MCF 10A (cell line): ENCODE measurements at regions of chr18 and their contacts with region 1.

Region 1: GRCh38 chr18:54224379-54225014 is at the start of gene MBD2:
- DNase-seq: peak; percentile 95
- H3K4me3 Mint-ChIP-seq: peak within 1 kb of the TSS; percentile 93
- H3K27ac Mint-ChIP-seq: peak within 1 kb of the TSS; percentile 97
- H3K4me1 Mint-ChIP-seq: peaks cover 11% of the 10 kb centered on the region
- H3K27me3 Mint-ChIP-seq: no peaks in the 10 kb centered on the region
- CTCF ChIP-seq: no peak
- total RNA-seq, gene MBD2: 179 and 194 TPM in 2 replicates

Region 2: GRCh38 chr18:54149078-54149697 is 75.3 kb before region 1 on chr18:
- CTCF ChIA-PET with region 1: no interaction called
- POLR2A ChIA-PET with region 1: interaction called, 30 read pairs
- intact Hi-C with region 1: loop called (anchors 1 kb)
- DNase-seq: peak; percentile 93
- H3K4me3 Mint-ChIP-seq: peak overlapping the region; percentile 65
- H3K27ac Mint-ChIP-seq: peak overlapping the region; percentile 99
- H3K4me1 Mint-ChIP-seq: peaks cover 42% of the 10 kb centered on the region
- H3K27me3 Mint-ChIP-seq: no peaks in the 10 kb centered on the region
- CTCF ChIP-seq: no peak

Region 3: DNA sequence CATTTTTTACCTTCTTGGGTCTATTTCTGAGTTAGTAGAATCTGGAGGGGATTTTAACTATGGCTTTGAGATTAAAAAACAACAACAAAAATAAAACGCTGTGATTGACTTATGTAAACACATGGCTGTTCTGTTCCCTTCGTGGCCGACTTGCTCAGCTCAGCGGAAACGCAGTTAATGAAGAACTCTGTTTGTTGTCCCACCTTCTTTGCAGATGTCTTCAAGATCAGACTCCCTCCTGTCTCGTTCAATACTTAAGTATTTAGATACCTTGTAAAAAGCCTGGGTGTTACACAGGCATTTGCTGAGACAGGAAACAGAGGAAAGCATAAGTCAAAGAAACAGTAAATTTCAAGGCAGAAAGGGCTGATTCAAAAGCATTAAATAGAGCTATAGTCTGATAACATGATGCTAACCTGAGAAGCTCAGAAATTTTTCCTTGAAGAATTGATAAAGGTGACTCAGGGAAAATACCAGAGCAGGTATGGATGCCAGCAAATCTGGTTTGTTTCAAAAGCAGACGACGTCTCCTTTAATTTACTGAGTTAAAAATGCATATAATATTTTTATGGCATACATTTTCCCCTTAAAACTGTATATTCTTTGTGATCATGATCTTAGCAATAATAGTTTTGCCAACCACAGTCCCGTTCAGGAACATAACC is 23.1 kb after region 1 on chr18:
- CTCF ChIA-PET with region 1: interaction called, 12 read pairs
- POLR2A ChIA-PET with region 1: interaction called, 45 read pairs
- intact Hi-C with region 1: no loop called
- DNase-seq: no peak
- H3K4me3 Mint-ChIP-seq: no peak overlapping the region
- H3K27ac Mint-ChIP-seq: peak overlapping the region; percentile 96
- H3K4me1 Mint-ChIP-seq: peaks cover 17% of the 10 kb centered on the region
- H3K27me3 Mint-ChIP-seq: no peaks in the 10 kb centered on the region
- CTCF ChIP-seq: no peak

Region 4: GRCh38 chr18:54330768-54331548 is 106.5 kb after region 1 on chr18:
- CTCF ChIA-PET with region 1: interaction called, 3 read pairs
- POLR2A ChIA-PET with region 1: no interaction called
- intact Hi-C with region 1: loop called (anchors 1 kb)
- DNase-seq: peak; percentile 8
- H3K4me3 Mint-ChIP-seq: no peak overlapping the region
- H3K27ac Mint-ChIP-seq: no peak overlapping the region
- H3K4me1 Mint-ChIP-seq: peaks cover 3% of the 10 kb centered on the region
- H3K27me3 Mint-ChIP-seq: no peaks in the 10 kb centered on the region
- CTCF ChIP-seq: no peak

Region 5: GRCh38 chr18:54357660-54358494 is 133.4 kb after region 1 on chr18 and contains the starts of genes C18orf54 and STARD6:
- CTCF ChIA-PET with region 1: interaction called, 4 read pairs
- POLR2A ChIA-PET with region 1: interaction called, 15 read pairs
- intact Hi-C with region 1: no loop called
- DNase-seq: peak; percentile 91
- H3K4me3 Mint-ChIP-seq: peak within 1 kb of the TSS; percentile 100
- H3K27ac Mint-ChIP-seq: peak within 1 kb of the TSS; percentile 99
- H3K4me1 Mint-ChIP-seq: peaks cover 6% of the 10 kb centered on the region
- H3K27me3 Mint-ChIP-seq: no peaks in the 10 kb centered on the region
- CTCF ChIP-seq: peak; percentile 62
- total RNA-seq, gene C18orf54: 4.4 and 5.5 TPM in 2 replicates
- total RNA-seq, gene STARD6: not detected in 2 replicates

Region 6: GRCh38 chr18:54392543-54393023 is 168.1 kb after region 1 on chr18:
- CTCF ChIA-PET with region 1: interaction called, 3 read pairs
- POLR2A ChIA-PET with region 1: interaction called, 3 read pairs
- intact Hi-C with region 1: loop called (anchors 2 kb)
- DNase-seq: peak; percentile 71
- H3K4me3 Mint-ChIP-seq: no peak overlapping the region
- H3K27ac Mint-ChIP-seq: no peak overlapping the region
- H3K4me1 Mint-ChIP-seq: peaks cover 13% of the 10 kb centered on the region
- H3K27me3 Mint-ChIP-seq: no peaks in the 10 kb centered on the region
- CTCF ChIP-seq: peak; percentile 63